HepG2 (cell line): ENCODE measurements at regions of chr7 and their contacts with region 1.

Region 1: DNA sequence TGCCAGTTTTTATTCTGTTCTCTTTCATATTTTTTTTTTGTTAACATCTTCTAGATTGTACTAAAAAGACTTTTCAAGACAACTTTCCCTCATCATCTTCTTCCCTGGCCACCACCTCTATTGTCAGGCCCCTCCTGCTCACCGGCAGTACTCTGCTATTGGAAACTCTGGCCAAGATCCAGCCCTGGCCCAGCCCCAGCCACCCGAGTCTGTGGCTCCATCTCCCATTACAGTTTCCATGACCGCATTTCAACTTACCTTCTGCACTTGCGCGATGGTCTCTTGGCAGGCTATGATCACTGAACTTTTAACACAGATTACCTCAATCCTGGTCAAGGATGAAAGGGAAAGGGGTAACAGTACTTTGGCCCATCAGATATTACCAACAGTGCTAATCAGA is 137.7 kb upstream of the POM121L12 start:
- DNase-seq: no peak
- ATAC-seq: no peak
- H3K4me3 ChIP-seq: no peak overlapping the region
- H3K27ac ChIP-seq: no peak overlapping the region
- H3K4me1 ChIP-seq: no peaks in the 10 kb centered on the region
- H3K27me3 ChIP-seq: no peaks in the 10 kb centered on the region
- CTCF ChIP-seq: no peak
- EP300 ChIP-seq: no peak
- POLR2A ChIP-seq: no peak
- RAD21 ChIP-seq: no peak

Region 2: GRCh38 chr7:52917982-52918578 is 20.4 kb after region 1 on chr7:
- CTCF ChIA-PET with region 1: no interaction called
- POLR2A ChIA-PET with region 1: no interaction called
- in situ Hi-C with region 1: no loop called
- intact Hi-C with region 1: loop called (anchors 1 kb)
- DNase-seq: no peak
- ATAC-seq: peak; percentile 74
- H3K4me3 ChIP-seq: no peak overlapping the region
- H3K27ac ChIP-seq: no peak overlapping the region
- H3K4me1 ChIP-seq: no peaks in the 10 kb centered on the region
- H3K27me3 ChIP-seq: no peaks in the 10 kb centered on the region
- CTCF ChIP-seq: peak; percentile 37
- EP300 ChIP-seq: no peak
- POLR2A ChIP-seq: no peak
- RAD21 ChIP-seq: no peak